PC-3 (cell line): ENCODE measurements at regions of chr13 and their contacts with region 1.

Region 1: DNA sequence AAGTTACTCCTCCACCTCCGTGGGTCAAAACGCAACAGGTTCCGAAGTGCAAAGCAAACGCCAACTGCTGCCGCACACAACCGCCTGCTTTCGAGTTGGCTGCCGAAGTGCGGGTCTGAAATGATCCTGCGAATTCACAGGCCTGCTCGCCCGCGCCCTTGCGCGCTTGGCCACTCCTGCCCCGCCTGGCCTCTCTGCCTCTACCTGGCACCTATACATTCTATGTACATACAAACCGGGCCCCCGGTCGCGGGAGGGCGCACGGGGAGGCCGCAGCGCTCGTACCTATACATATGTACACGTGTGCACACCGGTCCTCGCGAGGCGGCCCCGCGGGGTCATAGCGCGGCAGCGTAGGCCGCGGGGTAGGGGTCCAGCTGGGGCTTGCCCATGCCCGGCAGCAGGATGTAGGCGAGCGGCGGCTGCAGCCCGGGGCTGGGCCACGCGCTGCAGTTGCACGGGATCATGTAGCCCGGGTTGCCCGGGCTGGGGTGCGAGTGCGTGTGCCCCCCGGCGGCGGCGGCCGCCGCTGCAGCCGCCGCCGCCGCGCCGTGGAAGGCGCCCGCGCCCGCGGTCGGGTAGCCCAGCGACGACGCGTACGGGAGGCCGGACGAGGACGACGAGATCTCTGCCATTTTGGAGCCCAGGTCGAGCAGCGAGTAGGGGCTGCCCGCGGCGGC is 1.3 kb downstream of the SOX21 start:
- DNase-seq: peak; percentile 59
- ATAC-seq: peak; percentile 29
- H3K4me3 ChIP-seq: peak overlapping the region; percentile 98
- H3K27ac ChIP-seq: peak overlapping the region; percentile 79
- H3K4me1 ChIP-seq: 0 out of 2 replicates have a peak, but pooled peaks cover 18% of the 10 kb centered on the region
- H3K27me3 ChIP-seq: no peaks in the 10 kb centered on the region
- CTCF ChIP-seq: peak; percentile 28; the same call in 1 of the 2 replicates

Region 2: DNA sequence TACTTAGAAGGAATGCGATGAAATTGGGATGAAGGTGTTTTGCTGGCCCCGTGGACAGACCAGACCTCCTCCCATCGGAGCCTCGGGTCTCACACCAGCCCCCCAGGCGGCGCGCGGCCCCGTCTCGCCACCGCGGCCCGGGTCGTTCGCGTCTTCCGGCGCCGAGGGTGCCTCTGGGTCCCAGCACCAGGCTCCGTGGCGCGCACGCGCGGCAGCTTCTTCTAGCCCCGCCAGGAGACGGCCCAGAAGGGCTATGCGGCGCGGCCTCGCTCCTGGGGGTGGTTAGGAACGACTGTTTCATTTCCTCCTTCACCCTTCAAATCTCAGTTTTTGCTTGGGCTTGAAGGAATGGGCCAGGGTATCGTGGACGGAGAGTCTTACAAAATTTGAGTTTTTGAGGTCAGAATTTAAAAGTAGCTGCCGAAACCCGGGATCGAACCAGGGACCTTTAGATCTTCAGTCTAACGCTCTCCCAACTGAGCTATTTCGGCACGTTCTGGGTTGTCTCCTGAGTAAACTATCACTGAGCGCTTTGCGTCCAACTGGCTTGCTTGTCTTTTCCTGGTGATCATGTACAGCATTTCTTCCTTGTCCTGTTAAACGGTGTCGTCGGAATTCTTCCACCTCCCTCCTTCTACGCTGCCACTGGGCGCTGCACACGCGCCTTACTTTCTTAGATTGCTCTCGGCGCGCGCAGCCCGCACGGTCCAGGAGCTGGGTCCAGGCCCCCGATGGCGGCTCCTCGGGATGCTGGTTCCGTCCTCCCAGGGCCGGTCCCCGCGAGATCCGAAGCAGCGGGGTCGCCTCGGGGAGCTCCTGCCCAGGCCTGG is 161.6 kb before region 1 on chr13:
- CTCF ChIA-PET with region 1: no interaction called
- POLR2A ChIA-PET with region 1: no interaction called
- intact Hi-C with region 1: loop called (anchors 5 kb)
- DNase-seq: peak; percentile 92
- ATAC-seq: peak; percentile 86
- H3K4me3 ChIP-seq: peak overlapping the region; percentile 85
- H3K27ac ChIP-seq: peak overlapping the region; percentile 58
- H3K4me1 ChIP-seq: peaks cover 8% of the 10 kb centered on the region
- H3K27me3 ChIP-seq: no peaks in the 10 kb centered on the region
- CTCF ChIP-seq: no peak

Region 3: GRCh38 chr13:94660695-94661326 is 50.2 kb before region 1 on chr13:
- CTCF ChIA-PET with region 1: no interaction called
- POLR2A ChIA-PET with region 1: interaction called, 3 read pairs
- intact Hi-C with region 1: loop called (anchors 2 kb)
- DNase-seq: peak; percentile 51
- ATAC-seq: no peak
- H3K4me3 ChIP-seq: no peak overlapping the region
- H3K27ac ChIP-seq: no peak overlapping the region
- H3K4me1 ChIP-seq: peaks cover 34% of the 10 kb centered on the region
- H3K27me3 ChIP-seq: no peaks in the 10 kb centered on the region
- CTCF ChIP-seq: peak; percentile 65

Region 4: GRCh38 chr13:94776956-94777355 is 65.9 kb after region 1 on chr13:
- CTCF ChIA-PET with region 1: no interaction called
- POLR2A ChIA-PET with region 1: no interaction called
- intact Hi-C with region 1: loop called (anchors 5 kb)
- DNase-seq: no peak
- ATAC-seq: no peak
- H3K4me3 ChIP-seq: no peak overlapping the region
- H3K27ac ChIP-seq: no peak overlapping the region
- H3K4me1 ChIP-seq: peaks cover 25% of the 10 kb centered on the region
- H3K27me3 ChIP-seq: no peaks in the 10 kb centered on the region
- CTCF ChIP-seq: no peak

Region 5: DNA sequence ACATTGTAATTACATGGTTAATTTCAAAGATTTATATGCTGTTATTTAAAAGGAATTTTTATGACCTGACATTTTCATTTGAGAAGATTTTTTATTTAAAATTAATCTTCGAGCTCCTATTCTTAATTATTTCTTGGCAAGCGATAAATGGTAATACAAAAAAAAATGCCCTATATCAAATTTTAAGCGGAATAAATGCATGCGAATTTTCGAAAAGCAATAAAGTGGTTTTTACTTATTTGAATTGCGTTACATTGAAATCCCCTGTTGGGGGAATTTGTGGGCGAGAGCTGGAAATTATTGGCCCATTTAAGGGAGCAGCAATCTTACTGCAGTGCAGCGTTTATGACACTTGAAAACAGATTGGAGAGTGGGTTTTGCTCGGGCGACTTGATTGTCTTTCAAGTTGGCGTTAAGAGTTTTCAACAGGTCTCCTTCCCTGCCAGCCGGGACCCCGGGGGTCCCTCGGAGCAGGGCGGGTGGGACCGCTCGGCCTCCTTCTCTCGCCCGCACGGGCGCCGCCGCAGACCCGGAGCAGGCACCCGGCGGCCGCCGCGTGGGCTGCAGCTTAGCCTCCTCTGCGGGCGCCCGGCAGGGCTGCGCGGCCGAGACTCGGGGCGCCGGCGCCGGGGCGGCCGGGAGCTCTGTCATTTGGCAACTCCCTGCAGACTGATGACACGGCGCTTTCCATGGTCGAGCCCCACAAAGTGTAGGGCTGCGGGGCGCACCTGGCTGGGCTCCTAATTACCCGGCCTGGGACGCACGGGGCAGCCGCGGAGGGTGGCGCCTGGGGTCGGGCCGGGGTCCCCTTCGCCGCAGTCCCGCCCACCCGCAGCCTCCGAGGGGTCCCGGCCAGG is 256.4 kb after region 1 on chr13:
- CTCF ChIA-PET with region 1: interaction called, 5 read pairs
- POLR2A ChIA-PET with region 1: no interaction called
- intact Hi-C with region 1: loop called (anchors 5 kb)
- DNase-seq: peak; percentile 34
- ATAC-seq: peak; percentile 87
- H3K4me3 ChIP-seq: peak overlapping the region; percentile 66
- H3K27ac ChIP-seq: no peak overlapping the region
- H3K4me1 ChIP-seq: peaks cover 10% of the 10 kb centered on the region; the same call in 1 of the 2 replicates
- H3K27me3 ChIP-seq: no peaks in the 10 kb centered on the region
- CTCF ChIP-seq: no peak

Region 6: GRCh38 chr13:95100525-95101433 is 389.8 kb after region 1 on chr13:
- CTCF ChIA-PET with region 1: no interaction called
- POLR2A ChIA-PET with region 1: no interaction called
- intact Hi-C with region 1: loop called (anchors 5 kb)
- DNase-seq: peak; percentile 97
- ATAC-seq: peak; percentile 71
- H3K4me3 ChIP-seq: peak overlapping the region; percentile 39; the same call in 1 of the 2 replicates
- H3K27ac ChIP-seq: peak overlapping the region; percentile 100
- H3K4me1 ChIP-seq: peaks cover 37% of the 10 kb centered on the region
- H3K27me3 ChIP-seq: no peaks in the 10 kb centered on the region
- CTCF ChIP-seq: no peak

Region 7: DNA sequence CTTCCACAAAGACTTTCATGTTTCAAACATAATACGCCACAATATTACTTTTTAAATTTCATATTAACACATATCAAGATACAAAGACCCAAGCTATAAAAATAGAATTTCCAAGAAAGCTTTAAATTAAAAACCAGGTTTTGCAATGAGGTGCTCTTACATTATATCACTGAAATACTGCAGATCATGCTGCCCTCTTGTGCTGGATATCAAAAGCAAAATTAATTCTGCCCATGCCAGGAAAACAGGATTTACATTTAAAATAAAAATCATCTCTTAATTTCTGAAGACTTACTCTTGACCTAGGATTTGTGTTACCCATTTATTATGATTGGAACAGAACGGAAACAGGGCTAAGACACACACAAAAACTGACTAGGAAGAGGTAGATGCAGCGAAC is 445.2 kb after region 1 on chr13:
- CTCF ChIA-PET with region 1: interaction called, 7 read pairs
- POLR2A ChIA-PET with region 1: interaction called, 8 read pairs
- intact Hi-C with region 1: loop called (anchors 1 kb)
- DNase-seq: peak; percentile 56
- ATAC-seq: no peak
- H3K4me3 ChIP-seq: no peak overlapping the region
- H3K27ac ChIP-seq: peak overlapping the region; percentile 98
- H3K4me1 ChIP-seq: peaks cover 33% of the 10 kb centered on the region
- H3K27me3 ChIP-seq: no peaks in the 10 kb centered on the region
- CTCF ChIP-seq: peak; percentile 75